GM12878 (cell line): ENCODE measurements at regions of chr20 and their contacts with region 1.

Region 1: DNA sequence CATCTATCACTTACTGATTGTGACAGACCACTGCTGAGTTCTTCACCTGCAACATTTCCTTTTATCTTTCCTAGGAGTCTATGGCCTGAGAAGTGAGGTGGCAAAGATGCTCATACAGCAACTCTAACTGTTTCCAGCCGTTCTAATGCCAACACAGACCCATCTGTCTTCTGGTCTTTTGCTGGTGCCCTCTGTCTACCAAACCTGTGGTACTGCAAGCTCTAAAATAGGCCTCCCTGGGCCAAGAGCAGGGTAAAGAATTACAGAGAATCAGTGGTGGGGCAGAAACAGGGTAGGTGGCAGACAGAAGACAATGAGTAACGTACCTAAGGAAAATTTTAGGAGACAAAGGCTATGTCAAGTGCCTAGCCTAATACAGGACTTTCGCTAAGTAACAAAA is 611.0 kb upstream of the FLRT3 start:
- DNase-seq: no peak
- ATAC-seq: peak; percentile 60
- H3K4me3 ChIP-seq: no peak overlapping the region
- H3K27ac ChIP-seq: no peak overlapping the region
- H3K4me1 ChIP-seq: no peaks in the 10 kb centered on the region
- H3K27me3 ChIP-seq: no peaks in the 10 kb centered on the region
- CTCF ChIP-seq: peak in 2 of 3 experiments; percentile 22 to 36; a peak in 2 of 6 replicates
- EP300 ChIP-seq: no peak
- POLR2A ChIP-seq: no peak
- RAD21 ChIP-seq: 0 out of 2 replicates have a peak, but pooled peaks have one; percentile 7

Region 2: GRCh38 chr20:14896569-14896968 is 51.9 kb before region 1 on chr20:
- CTCF ChIA-PET with region 1: no interaction called
- POLR2A ChIA-PET with region 1: no interaction called
- RAD21 ChIA-PET with region 1: no interaction called
- SMC1A ChIA-PET with region 1: no interaction called
- in situ Hi-C with region 1: no loop called
- intact Hi-C with region 1: no loop called
- DNase-seq: no peak
- ATAC-seq: no peak
- H3K4me3 ChIP-seq: no peak overlapping the region
- H3K27ac ChIP-seq: no peak overlapping the region
- H3K4me1 ChIP-seq: no peaks in the 10 kb centered on the region
- H3K27me3 ChIP-seq: no peaks in the 10 kb centered on the region
- CTCF ChIP-seq: no peak
- EP300 ChIP-seq: no peak
- POLR2A ChIP-seq: no peak
- RAD21 ChIP-seq: no peak

Region 3: DNA sequence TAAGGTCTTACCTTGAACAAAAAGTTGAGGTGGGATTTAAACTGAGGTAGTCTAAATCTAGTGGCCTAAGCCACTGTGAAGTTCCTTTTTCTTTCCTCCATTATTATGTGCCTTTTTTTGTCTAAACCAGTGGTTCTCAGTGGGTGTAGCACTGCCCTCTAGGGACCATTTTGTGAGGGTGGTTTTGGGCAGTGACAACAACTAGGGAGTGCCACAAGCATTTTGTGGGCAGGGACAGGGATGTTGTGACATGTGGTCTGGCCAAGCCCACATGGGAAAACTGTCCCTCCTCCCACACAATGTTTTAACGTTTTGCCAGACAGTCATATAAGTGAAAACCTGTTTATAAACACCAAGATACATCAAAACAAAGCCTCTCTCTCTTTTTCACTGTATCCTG is 288.4 kb after region 1 on chr20:
- CTCF ChIA-PET with region 1: no interaction called
- POLR2A ChIA-PET with region 1: no interaction called
- RAD21 ChIA-PET with region 1: no interaction called
- SMC1A ChIA-PET with region 1: no interaction called
- in situ Hi-C with region 1: no loop called
- intact Hi-C with region 1: loop called (anchors 10 kb)
- DNase-seq: peak; percentile 38
- ATAC-seq: peak; percentile 96
- H3K4me3 ChIP-seq: no peak overlapping the region
- H3K27ac ChIP-seq: no peak overlapping the region
- H3K4me1 ChIP-seq: no peaks in the 10 kb centered on the region
- H3K27me3 ChIP-seq: no peaks in the 10 kb centered on the region
- CTCF ChIP-seq: peak; percentile 56 to 66 (median 61)
- EP300 ChIP-seq: no peak
- POLR2A ChIP-seq: no peak
- RAD21 ChIP-seq: peak; percentile 87